H1 (cell line): ENCODE measurements at regions of chrX and their contacts with region 1.

Region 1: GRCh38 chrX:12814420-12814819 is 23.2 kb downstream of the PRPS2 start:
- DNase-seq: peak in 1 of 2 experiments; percentile 43
- H3K4me3 ChIP-seq: no peak overlapping the region
- H3K27ac ChIP-seq: no peak overlapping the region
- H3K4me1 ChIP-seq: no peaks in the 10 kb centered on the region; a peak in 1 of 7 replicates
- H3K27me3 ChIP-seq: no peaks in the 10 kb centered on the region
- CTCF ChIP-seq: peak in 2 of 3 experiments; percentile 62; a peak in 3 of 4 replicates
- EP300 ChIP-seq: no peak
- POLR2A ChIP-seq: no peak
- RAD21 ChIP-seq: peak; percentile 77 to 85

Region 2: GRCh38 chrX:12825801-12826200 is 11.4 kb after region 1 on chrX:
- CTCF ChIA-PET with region 1: interaction called, 14 read pairs
- POLR2A ChIA-PET with region 1: no interaction called
- DNase-seq: no peak
- H3K4me3 ChIP-seq: no peak overlapping the region
- H3K27ac ChIP-seq: no peak overlapping the region
- H3K4me1 ChIP-seq: no peaks in the 10 kb centered on the region
- H3K27me3 ChIP-seq: no peaks in the 10 kb centered on the region
- CTCF ChIP-seq: no peak
- EP300 ChIP-seq: no peak
- POLR2A ChIP-seq: no peak
- RAD21 ChIP-seq: no peak

Region 3: DNA sequence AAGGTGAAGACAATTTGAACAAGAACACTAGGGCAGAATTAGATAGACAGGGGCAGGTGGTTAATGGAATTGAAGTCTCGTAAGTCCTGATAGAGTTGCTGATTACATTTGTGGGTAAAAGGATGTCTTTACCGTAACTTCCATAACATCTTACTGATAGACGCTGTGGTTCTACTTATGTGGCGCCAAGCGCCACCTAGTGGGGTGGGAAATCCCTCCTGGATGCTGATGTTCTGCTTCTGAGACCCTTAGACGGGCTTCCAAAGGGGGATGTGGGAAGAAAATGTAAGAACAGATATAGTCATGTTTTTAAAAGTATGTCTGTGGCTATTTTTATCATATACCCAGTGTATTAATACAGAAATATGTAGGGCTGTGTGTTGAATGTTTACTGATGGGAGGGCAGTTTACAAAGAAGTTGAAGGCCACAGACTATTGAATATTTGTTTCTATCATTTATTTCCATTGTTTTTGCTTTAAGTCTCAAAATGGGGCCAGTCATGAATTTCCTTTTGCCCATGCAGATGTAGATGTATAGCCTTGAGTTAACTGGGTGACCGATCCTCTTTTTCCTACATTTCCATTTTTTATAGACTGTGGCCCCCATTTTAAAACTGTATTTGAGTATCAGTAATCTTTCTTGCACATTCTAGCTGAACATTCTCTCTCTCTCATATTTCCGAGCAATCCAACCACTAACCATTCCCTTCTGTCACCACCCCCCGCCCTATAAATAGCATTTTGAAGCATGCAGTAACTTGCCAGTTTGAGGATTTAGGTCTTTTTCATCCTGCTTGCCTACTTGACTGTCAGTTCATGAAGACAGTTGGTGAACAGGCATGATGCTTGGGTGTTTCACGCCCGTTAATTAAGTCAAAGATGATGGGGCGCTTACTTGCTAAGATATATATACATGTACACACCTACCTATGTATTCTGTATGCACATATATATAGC is 79.9 kb after region 1 on chrX:
- CTCF ChIA-PET with region 1: interaction called, 28 read pairs
- POLR2A ChIA-PET with region 1: no interaction called
- DNase-seq: no peak
- H3K4me3 ChIP-seq: no peak overlapping the region
- H3K27ac ChIP-seq: no peak overlapping the region
- H3K4me1 ChIP-seq: no peaks in the 10 kb centered on the region
- H3K27me3 ChIP-seq: no peaks in the 10 kb centered on the region
- CTCF ChIP-seq: peak; percentile 15 to 44 (median 26)
- EP300 ChIP-seq: no peak
- POLR2A ChIP-seq: no peak
- RAD21 ChIP-seq: peak; percentile 53 to 63

Region 4: DNA sequence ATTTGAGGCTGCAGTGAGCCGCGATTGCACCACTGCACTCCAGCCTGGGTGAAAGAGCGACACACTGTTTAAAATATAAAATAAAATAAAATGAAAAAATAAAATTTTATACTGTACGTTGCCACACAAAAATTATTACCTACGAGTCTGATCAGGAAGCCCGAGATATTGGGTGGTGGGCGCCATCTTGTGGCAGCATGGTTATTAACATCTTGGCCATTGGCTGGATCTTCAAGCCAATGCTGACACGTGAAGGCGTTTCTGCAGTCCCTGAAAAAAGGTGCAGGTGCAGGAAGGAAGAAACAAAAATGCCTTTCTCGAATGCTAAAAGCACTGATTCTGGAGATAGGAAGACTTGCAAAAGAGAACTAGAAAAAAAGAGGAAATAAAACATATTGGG is 87.1 kb after region 1 on chrX:
- CTCF ChIA-PET with region 1: interaction called, 28 read pairs
- POLR2A ChIA-PET with region 1: interaction called, 3 read pairs
- DNase-seq: peak in 1 of 2 experiments; percentile 69
- H3K4me3 ChIP-seq: no peak overlapping the region
- H3K27ac ChIP-seq: no peak overlapping the region
- H3K4me1 ChIP-seq: peaks cover 0 to 2% (median 0%) of the 10 kb centered on the region in 4 experiments; a peak in 3 of 7 replicates
- H3K27me3 ChIP-seq: no peaks in the 10 kb centered on the region
- CTCF ChIP-seq: peak; percentile 36 to 54 (median 53)
- EP300 ChIP-seq: no peak
- POLR2A ChIP-seq: no peak
- RAD21 ChIP-seq: peak; percentile 67 to 73